Astrocyte of the cerebellum (primary cell): ENCODE measurements at regions of chr17 and their contacts with region 1.

Region 1: GRCh38 chr17:15257258-15257788 is 7.8 kb downstream of the PMP22 start:
- DNase-seq: peak; percentile 66
- H3K4me3 ChIP-seq: no peak overlapping the region
- CTCF ChIP-seq: peak; percentile 92

Region 2: DNA sequence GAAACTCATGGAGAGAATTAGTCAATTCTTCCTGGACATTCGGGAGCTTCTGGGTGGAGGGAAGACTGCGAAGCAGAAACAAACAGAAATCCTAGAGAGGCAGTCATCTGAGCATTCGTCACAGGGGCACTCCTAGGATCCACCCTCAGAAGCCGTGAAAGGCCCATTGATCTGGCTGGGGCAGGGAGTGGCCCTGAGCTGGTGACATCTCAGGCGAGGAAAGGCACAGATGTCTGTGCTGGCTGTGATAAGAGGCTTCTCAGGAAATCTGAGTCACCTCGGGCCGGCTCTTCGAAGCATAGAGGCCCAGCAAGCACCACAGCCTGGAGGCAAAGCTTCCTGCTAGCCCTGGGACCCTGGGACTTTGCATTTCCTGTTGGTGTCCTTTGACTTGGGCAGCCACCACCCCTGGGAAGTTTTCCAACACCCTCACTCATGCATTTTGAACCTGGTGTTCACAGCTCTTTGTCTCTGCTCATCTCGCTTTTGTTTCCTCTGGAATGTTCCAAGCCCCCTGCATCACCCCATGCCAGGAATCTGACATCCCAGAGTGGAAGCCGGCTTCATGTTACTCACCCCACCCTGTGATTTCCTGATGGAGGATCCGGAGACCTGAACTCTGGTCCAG is 233.4 kb after region 1 on chr17:
- in situ Hi-C with region 1: loop called (anchors 25 kb)
- DNase-seq: peak; percentile 9
- H3K4me3 ChIP-seq: no peak overlapping the region
- CTCF ChIP-seq: no peak